Astrocyte of the cerebellum (primary cell): ENCODE measurements at regions of chr5 and their contacts with region 1.

Region 1: GRCh38 chr5:173441053-173441628 is 112.9 kb upstream of the STC2 start:
- DNase-seq: no peak
- H3K4me3 ChIP-seq: no peak overlapping the region
- CTCF ChIP-seq: no peak

Region 2: DNA sequence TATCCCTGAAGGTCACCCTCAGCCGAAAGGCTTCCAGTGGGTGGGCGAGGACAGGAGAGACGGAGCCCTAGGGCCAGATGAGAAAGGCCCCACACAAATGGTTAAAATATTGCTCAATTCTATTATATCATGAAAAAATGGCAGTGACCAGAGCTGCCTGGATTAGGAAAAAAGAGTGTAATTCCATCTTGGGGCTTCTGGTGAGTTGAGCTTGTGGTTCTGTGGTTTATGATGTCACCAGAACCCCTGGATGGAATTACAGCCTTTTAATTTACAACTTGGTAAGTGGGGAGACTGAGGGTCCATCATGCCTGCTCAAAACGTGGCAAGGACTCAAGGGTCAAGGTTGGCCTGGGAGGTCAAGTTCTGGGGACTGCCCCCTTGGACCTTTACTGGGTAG is 57.4 kb before region 1 on chr5:
- in situ Hi-C with region 1: loop called (anchors 5 kb)
- DNase-seq: peak; percentile 16
- H3K4me3 ChIP-seq: no peak overlapping the region
- CTCF ChIP-seq: no peak

Region 3: DNA sequence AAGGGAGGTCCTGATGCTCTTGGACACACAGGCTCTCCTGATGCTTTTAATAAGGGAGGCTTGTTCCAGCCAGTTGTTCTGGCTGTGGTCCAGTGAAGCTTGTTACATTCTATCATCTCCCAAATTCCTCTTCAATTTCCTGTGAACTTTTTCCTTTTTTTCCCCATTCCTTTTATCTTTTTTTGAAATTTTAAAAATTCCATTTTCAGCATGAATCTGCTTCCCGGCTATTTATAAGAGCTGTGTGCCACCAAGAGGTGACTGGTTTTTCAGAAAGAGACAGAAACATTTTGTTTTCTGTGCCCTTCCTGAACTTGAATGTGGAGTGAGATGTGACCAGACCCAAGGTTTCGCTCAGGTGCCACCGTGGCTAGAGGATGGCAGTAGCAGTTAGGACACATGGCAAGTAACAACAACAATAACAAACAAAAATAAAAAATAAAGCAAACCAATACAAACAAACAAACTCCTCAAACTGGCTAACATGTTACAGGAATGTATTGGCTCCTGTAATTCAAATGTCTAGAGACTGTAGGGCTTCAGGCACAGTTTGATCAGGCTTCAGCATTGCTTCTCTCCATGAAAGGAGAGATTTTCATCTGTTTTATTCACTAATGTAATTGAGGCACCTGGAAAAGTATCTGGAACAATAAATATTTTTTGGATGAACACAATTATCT is 54.2 kb after region 1 on chr5:
- in situ Hi-C with region 1: no loop called
- DNase-seq: no peak
- H3K4me3 ChIP-seq: no peak overlapping the region
- CTCF ChIP-seq: no peak